GM10248 (cell line): ENCODE measurements at regions of chr19 and their contacts with region 1.

Region 1: GRCh38 chr19:51777570-51778462 is 16.8 kb downstream of the FPR2 start:
- DNase-seq: peak; percentile 53
- CTCF ChIP-seq: peak; percentile 57

Region 2: DNA sequence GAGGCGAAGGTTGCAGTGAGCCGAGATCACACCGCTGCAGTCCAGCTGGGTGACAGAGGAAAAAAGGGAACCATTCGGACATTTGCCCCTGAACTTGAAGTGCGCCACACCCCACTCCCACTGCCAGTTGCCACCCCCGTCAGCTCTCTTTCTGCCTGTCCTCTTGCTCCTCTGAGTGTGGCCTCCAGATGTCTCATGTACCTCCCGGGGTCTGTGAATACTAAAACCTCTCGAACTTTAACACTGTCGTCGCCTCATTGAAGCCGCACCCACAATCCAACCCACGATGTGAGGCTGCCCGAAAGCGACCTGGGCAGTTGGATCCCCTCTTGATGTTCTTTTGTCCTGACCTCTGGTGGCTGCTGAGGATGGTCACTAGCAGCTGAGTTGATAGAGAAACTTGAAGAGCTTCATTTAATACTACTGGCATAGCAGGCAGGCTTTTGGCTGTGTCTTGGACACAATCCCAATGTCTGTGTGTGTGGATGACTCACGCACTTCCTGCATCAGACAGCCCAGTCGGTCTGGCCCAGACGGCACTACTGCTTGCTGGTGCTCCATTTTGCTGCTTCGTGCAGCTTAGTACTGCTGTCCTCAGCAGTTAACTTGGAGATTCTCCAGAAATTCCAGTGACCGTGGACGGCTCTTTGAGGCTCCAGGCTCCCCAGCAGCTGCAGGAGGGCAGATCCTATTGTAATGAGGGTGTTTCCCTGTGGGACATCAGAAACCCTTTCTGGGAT is 21.4 kb after region 1 on chr19:
- CTCF ChIA-PET with region 1: interaction called, 16 read pairs
- POLR2A ChIA-PET with region 1: no interaction called
- DNase-seq: no peak
- CTCF ChIP-seq: no peak